HCT116 (cell line): ENCODE measurements at regions of chr11 and their contacts with region 1.

Region 1: DNA sequence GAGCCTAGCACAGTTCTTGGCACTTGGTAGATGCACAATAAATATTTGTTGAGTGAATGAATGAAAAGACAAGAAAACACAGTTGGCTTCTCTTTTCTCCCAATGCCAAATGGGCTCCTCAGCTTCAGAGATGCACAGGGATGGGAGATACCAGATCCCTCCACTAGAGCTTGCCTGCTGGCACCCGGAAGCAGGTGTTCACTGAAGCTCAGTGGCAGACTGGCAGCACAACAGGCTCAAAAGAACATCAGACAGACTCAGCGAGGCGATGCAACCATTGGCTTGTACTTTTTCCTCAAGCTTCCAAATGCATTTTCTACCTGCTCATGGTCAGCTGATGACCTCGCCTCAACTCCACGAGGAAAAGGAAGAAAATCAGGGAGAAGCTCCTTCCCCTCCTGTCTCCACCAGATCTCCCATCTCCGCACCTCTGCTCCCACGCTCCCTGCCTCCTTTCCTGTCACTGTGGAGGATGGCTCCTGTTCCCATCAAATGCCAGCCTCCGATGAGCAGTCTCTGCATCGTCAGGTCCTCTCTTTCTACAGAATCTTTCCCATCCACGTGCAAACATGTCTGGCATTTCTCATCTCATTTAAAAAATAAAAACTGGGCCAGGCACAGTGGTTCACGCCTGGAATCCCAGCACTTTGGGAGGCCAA is 5.8 kb downstream of the RAPSN start:
- DNase-seq: no peak
- ATAC-seq: peak; percentile 80
- H3K4me3 ChIP-seq: no peak overlapping the region
- H3K27ac ChIP-seq: no peak overlapping the region
- H3K4me1 ChIP-seq: no peaks in the 10 kb centered on the region
- H3K27me3 ChIP-seq: no peaks in the 10 kb centered on the region
- CTCF ChIP-seq: peak in 2 of 3 experiments; percentile 22 to 28; a peak in 2 of 6 replicates
- POLR2A ChIP-seq: no peak
- RAD21 ChIP-seq: no peak

Region 2: DNA sequence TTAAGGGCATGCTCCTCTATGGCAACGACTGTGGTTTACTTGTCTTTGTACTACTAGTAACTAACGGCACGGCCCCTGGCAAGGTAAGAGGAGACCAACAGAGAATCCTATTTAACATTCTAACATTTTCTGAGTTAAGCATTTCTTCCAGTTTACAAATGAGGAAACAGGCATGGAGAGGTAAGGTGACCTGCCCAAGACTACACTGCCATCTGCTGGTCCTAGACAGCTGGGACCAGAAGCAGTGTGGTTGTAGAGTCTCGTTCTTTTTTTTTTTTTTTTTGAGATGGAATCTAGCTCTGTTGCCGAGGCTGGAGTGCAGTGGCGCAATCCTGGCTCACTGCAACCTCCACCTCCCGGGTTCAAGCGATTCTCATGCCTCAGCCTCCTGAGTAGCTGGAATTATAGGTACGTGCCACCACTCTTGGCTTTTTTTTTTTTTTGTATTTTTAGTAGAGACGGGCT is 11.0 kb after region 1 on chr11:
- CTCF ChIA-PET with region 1: interaction called, 16 read pairs
- POLR2A ChIA-PET with region 1: no interaction called
- RAD21 ChIA-PET with region 1: no interaction called
- intact Hi-C with region 1: no loop called
- DNase-seq: peak; percentile 62
- ATAC-seq: peak; percentile 89
- H3K4me3 ChIP-seq: no peak overlapping the region
- H3K27ac ChIP-seq: no peak overlapping the region
- H3K4me1 ChIP-seq: peaks cover 0 to 2% of the 10 kb centered on the region in 2 experiments; a peak in 1 of 4 replicates
- H3K27me3 ChIP-seq: no peaks in the 10 kb centered on the region
- CTCF ChIP-seq: peak; percentile 76 to 86 (median 77); a peak in 5 of 6 replicates
- POLR2A ChIP-seq: no peak
- RAD21 ChIP-seq: peak; percentile 83